ENCODE measurements at regions of chr2 and their contacts with region 1.

Region 1: GRCh38 chr2:65186872-65187851 is 40.5 kb upstream of the ACTR2 start:
- DNase-seq: peak; percentile 78
- ATAC-seq: peak; percentile 85
- H3K4me3 ChIP-seq: no peak overlapping the region
- H3K4me3 Mint-ChIP-seq: no peak overlapping the region
- H3K27ac ChIP-seq: no peak overlapping the region
- H3K27ac Mint-ChIP-seq: no peak overlapping the region
- H3K4me1 ChIP-seq: peaks cover 5 to 6% of the 10 kb centered on the region in 2 donors
- H3K4me1 Mint-ChIP-seq: peaks cover 6% of the 10 kb centered on the region
- H3K27me3 ChIP-seq: peaks cover 0 to 6% (median 0%) of the 10 kb centered on the region in 4 experiments
- H3K27me3 Mint-ChIP-seq: peaks cover 19% of the 10 kb centered on the region
- CTCF ChIP-seq: peak; percentile 83

Region 2: GRCh38 chr2:65017335-65017734 is 169.8 kb before region 1 on chr2:
- CTCF ChIA-PET with region 1: no interaction called
- POLR2A ChIA-PET with region 1: no interaction called
- intact Hi-C with region 1: no loop called
- DNase-seq: peak; percentile 73
- ATAC-seq: peak; percentile 82
- H3K4me3 ChIP-seq: no peak overlapping the region
- H3K4me3 Mint-ChIP-seq: peak overlapping the region; percentile 55
- H3K27ac ChIP-seq: no peak overlapping the region
- H3K27ac Mint-ChIP-seq: peak overlapping the region; percentile 72
- H3K4me1 ChIP-seq: peaks cover 29 to 35% of the 10 kb centered on the region in 2 donors
- H3K4me1 Mint-ChIP-seq: peaks cover 48% of the 10 kb centered on the region
- H3K27me3 ChIP-seq: no peaks in the 10 kb centered on the region
- H3K27me3 Mint-ChIP-seq: no peaks in the 10 kb centered on the region
- CTCF ChIP-seq: peak; percentile 69

Region 3: DNA sequence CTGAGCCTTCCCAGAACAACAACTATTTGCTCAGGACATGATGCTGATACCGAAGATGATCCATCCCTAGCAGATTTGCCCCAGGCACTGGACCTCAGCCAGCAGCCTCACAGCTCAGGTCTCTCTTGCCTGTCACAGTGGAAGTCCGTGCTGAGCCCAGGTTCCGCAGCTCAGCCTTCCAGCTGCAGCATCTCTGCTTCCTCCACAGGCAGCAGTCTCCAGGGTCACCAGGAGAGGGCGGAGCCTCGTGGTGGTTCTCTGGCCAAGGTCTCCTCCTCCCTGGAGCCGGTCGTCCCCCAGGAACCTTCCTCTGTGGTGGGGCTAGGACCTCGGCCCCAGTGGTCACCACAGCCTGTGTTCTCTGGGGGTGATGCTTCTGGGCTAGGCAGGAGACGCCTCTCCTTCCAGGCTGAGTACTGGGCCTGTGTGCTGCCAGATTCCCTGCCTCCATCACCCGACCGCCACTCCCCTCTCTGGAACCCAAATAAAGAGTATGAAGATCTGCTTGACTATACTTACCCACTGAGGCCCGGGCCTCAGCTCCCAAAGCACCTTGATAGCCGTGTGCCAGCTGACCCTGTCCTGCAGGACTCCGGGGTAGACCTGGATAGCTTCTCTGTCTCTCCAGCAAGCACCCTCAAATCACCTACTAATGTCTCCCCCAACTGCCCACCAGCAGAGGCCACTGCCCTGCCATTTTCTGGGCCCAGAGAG is 115.5 kb before region 1 on chr2:
- CTCF ChIA-PET with region 1: interaction called, 10 read pairs
- POLR2A ChIA-PET with region 1: no interaction called
- intact Hi-C with region 1: no loop called
- DNase-seq: no peak
- ATAC-seq: no peak
- H3K4me3 ChIP-seq: no peak overlapping the region
- H3K4me3 Mint-ChIP-seq: no peak overlapping the region
- H3K27ac ChIP-seq: peak overlapping the region in 1 of 2 donors; percentile 17
- H3K27ac Mint-ChIP-seq: peak overlapping the region; percentile 59
- H3K4me1 ChIP-seq: peaks cover 7 to 21% of the 10 kb centered on the region in 2 donors
- H3K4me1 Mint-ChIP-seq: peaks cover 42% of the 10 kb centered on the region
- H3K27me3 ChIP-seq: no peaks in the 10 kb centered on the region
- H3K27me3 Mint-ChIP-seq: no peaks in the 10 kb centered on the region
- CTCF ChIP-seq: no peak

Region 4: DNA sequence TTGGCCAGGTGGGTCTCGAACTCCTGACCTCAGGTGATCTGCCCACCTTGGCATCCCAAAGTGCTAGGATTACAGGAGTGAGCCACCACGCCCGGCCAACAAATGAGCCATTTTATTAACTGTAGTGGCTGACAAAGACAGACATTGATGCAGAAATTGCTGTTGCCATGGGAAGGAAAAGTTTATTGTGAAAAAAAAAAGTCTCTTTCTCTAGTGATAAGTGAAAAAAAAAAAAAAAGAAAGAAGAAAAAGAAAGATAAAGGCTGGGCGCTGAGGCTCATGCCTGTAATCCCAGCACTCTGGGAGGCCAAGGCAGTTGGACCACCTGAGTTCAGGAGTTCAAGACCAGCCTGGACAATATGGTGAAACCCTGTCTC is 17.4 kb before region 1 on chr2:
- CTCF ChIA-PET with region 1: interaction called, 10 read pairs
- POLR2A ChIA-PET with region 1: no interaction called
- intact Hi-C with region 1: no loop called
- DNase-seq: no peak
- ATAC-seq: no peak
- H3K4me3 ChIP-seq: no peak overlapping the region
- H3K4me3 Mint-ChIP-seq: no peak overlapping the region
- H3K27ac ChIP-seq: no peak overlapping the region
- H3K27ac Mint-ChIP-seq: no peak overlapping the region
- H3K4me1 ChIP-seq: peaks cover 8 to 10% of the 10 kb centered on the region in 2 donors
- H3K4me1 Mint-ChIP-seq: peaks cover 12% of the 10 kb centered on the region
- H3K27me3 ChIP-seq: no peaks in the 10 kb centered on the region
- H3K27me3 Mint-ChIP-seq: no peaks in the 10 kb centered on the region
- CTCF ChIP-seq: no peak

Region 5: DNA sequence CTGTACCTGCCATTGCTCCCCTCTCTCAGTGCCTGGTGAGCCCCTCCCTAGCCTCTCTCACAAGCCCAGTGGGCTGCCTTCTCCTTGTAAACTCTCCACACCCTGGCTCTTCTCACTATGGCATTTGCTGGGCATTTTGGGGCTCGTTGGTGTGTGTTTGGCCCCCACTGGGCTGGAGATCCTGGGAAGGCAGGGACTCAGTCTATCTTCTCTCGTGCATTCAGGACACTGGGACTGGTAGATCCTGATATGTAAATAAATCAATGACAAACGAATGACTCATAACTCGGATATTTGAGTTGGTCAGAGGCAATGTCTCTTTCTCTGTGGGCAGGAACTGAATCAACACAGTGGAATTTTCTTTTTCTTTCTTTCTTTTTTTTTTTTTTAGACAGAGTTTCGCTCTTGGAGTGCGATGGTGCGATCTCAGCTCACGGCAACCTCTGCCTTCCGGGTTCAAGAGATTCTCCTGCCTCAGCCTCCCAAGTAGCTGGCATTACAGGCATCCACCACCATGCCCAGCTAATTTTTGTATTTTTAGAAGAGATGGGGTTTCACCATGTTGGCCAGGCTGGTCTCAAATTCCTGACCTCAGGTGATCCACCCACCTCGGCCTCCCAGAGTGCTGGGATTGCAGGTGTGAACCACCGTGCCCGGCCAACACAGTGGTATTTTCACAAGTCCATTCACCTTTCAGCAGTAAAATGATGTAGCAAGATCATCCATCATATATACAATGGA is 389.9 kb after region 1 on chr2:
- CTCF ChIA-PET with region 1: interaction called, 5 read pairs
- POLR2A ChIA-PET with region 1: no interaction called
- intact Hi-C with region 1: loop called (anchors 10 kb)
- DNase-seq: no peak
- ATAC-seq: no peak
- H3K4me3 ChIP-seq: no peak overlapping the region
- H3K4me3 Mint-ChIP-seq: no peak overlapping the region
- H3K27ac ChIP-seq: no peak overlapping the region
- H3K27ac Mint-ChIP-seq: no peak overlapping the region
- H3K4me1 ChIP-seq: peaks cover 0 to 2% of the 10 kb centered on the region in 2 donors
- H3K4me1 Mint-ChIP-seq: peaks cover 6% of the 10 kb centered on the region
- H3K27me3 ChIP-seq: no peaks in the 10 kb centered on the region
- H3K27me3 Mint-ChIP-seq: no peaks in the 10 kb centered on the region
- CTCF ChIP-seq: no peak